ENCODE measurements at regions of chr12 and their contacts with region 1.

Region 1: GRCh38 chr12:112096667-112097066 is 11.9 kb downstream of the NAA25 start:
- DNase-seq: no peak
- ATAC-seq: peak; percentile 36 to 72 (median 64)
- H3K4me3 ChIP-seq: no peak overlapping the region
- H3K27ac ChIP-seq: peak overlapping the region; percentile 59
- H3K4me1 ChIP-seq: peaks cover 17% of the 10 kb centered on the region
- H3K27me3 ChIP-seq: no peaks in the 10 kb centered on the region
- CTCF ChIP-seq: no peak

Region 2: DNA sequence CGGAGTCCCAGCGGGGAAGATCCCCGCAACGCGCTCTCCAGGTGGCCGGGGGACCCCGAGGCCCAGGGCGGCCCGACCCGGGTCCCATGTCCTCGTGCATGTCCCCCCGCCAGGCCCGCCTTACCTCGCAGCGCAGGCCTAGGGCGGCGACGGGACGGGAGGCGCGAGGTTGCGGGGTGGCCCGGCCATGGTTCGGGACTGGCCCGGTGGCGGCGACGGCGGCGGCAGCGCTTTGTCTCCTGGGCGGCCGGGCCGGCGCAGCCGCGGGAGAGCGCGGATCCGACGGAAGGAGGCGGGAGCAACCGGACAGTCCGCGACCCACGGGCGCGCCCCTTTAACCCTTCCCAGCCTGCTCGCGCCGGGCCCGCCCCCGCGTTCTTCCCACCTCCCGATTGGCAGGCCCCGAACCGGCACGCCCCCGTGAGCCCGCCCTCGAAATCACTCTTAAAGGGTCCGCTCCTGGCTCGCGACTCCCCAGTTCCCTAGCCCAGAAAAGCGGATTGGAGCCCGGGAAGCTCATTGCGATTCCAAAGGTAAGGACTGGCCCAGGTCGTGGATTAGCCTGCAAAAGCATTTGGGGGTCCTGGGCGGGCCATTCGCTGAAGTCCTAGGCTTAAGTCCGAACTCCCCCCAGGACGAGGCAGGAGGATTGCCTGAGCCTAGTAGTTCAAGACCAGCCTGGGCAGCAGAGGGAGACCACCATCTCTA is 727.7 kb before region 1 on chr12 and contains the start of gene PHETA1:
- intact Hi-C with region 1: no loop called
- DNase-seq: peak; percentile 95 to 96
- ATAC-seq: peak; percentile 98 to 99 (median 99)
- H3K4me3 ChIP-seq: peak within 1 kb of the TSS; percentile 95
- H3K27ac ChIP-seq: peak within 1 kb of the TSS; percentile 74
- H3K4me1 ChIP-seq: peaks cover 16% of the 10 kb centered on the region
- H3K27me3 ChIP-seq: no peaks in the 10 kb centered on the region
- CTCF ChIP-seq: no peak
- total RNA-seq, gene PHETA1: 5.3 to 7.0 (median 6.1) TPM

Region 3: DNA sequence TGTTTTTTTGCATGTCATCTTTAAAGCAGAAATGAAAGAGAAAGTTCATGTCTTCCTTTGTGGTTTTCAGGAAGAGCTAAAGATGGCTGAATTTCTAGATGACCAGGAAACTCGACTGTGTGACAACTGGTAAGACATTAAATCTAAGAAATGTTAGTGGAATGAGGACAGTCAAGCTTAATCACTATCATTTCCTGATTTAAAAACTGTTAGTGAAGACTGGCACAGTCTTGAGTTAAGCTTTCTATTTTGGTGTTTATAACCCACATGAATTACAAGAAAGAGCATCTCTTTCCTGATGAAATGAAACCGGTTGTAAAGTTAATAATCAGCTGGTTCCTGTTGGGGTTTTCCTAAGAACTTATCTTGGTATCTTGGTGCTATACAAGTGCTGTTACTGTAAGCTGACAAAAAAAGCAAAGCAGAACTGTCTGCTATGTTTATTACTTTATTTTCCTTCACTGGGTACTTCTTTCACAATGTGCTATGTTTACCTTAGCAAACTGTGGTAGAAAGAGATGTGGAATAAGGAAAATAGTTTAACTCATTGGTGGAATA is 33.9 kb after region 1 on chr12:
- intact Hi-C with region 1: loop called in 1 of 2 experiments (anchors 5 kb)
- DNase-seq: no peak
- ATAC-seq: no peak
- H3K4me3 ChIP-seq: peak overlapping the region; percentile 4
- H3K27ac ChIP-seq: peak overlapping the region; percentile 56
- H3K4me1 ChIP-seq: peaks cover 30% of the 10 kb centered on the region
- H3K27me3 ChIP-seq: no peaks in the 10 kb centered on the region
- CTCF ChIP-seq: no peak

Region 4: GRCh38 chr12:112183141-112184021 is 86.7 kb after region 1 on chr12:
- intact Hi-C with region 1: no loop called
- DNase-seq: no peak
- ATAC-seq: peak; percentile 73 to 82 (median 78)
- H3K4me3 ChIP-seq: no peak overlapping the region
- H3K27ac ChIP-seq: no peak overlapping the region
- H3K4me1 ChIP-seq: no peaks in the 10 kb centered on the region
- H3K27me3 ChIP-seq: no peaks in the 10 kb centered on the region
- CTCF ChIP-seq: no peak

Region 5: DNA sequence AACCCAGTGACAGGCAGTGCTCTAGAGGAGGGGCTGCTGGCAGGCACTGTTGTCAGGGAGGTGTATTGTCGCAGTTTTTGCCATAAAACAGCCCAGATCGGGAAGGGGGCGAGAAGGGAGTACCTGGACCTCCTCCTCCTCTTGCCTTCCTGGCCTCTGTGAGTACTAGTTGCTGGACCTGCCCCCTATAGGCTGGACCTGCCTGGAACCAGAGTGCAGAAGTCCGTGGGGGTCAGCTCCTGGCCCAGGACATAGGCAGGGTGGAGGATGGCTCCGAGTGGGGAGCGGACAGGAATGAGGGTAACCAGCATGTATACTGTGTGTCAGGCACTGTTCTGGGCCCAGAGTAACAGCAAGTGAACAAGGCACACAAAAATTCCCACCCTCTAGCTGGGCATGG is 438.4 kb after region 1 on chr12:
- intact Hi-C with region 1: no loop called
- DNase-seq: no peak
- ATAC-seq: no peak
- H3K4me3 ChIP-seq: no peak overlapping the region
- H3K27ac ChIP-seq: no peak overlapping the region
- H3K4me1 ChIP-seq: no peaks in the 10 kb centered on the region
- H3K27me3 ChIP-seq: no peaks in the 10 kb centered on the region
- CTCF ChIP-seq: no peak